ENCODE measurements at regions of chr17 and their contacts with region 1.

Region 1: GRCh38 chr17:40168262-40168832 is 8.9 kb upstream of the RAPGEFL1 start:
- DNase-seq: peak; percentile 44
- H3K4me3 Mint-ChIP-seq: no peak overlapping the region
- H3K27ac Mint-ChIP-seq: peak overlapping the region; percentile 77
- H3K4me1 Mint-ChIP-seq: peaks cover 7% of the 10 kb centered on the region
- H3K27me3 Mint-ChIP-seq: no peaks in the 10 kb centered on the region

Region 2: DNA sequence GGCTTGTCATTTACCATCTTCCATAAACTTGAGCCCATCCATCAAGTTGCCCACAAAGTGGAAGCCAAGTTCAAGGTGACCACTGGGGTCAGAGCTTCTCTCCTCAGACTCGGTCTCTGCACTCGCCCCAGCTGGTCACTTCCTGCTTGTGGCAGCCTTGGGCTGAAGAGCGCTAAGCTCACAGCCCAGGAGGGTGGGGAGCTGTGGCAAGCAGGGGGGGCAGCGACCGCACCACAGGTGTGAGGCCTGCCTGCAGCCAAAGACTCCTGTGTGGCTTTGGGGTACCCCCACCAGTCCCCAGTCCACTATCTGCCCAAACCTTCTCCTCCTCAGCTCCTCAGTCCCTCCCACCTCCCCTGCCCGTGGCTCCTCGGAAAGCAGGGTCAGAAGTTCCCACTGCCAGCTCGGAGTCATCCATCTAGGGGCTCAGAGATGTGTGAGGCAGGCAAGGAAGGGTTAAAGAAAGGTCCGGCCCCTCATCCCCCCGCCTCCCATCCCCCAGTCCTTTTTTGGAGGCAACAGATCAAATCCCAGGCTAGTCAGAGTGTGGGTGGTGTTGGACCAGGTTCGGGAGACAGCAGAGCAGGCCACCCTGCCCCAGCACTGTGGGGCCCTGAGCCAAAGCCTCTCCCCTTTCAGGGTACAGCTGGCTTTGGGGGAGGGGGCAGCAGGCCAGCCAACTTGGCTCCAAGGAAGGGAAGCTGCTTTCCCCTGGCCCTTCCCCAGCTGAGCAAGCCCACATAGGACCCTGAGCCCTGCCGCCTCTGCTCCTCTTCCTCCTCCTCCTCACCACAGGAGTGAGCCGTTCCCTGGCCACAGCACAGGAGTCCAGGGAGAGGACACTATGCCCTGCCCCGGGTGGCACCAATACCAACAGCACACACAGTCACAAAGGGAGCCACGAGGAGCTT is 149.9 kb before region 1 on chr17:
- CTCF ChIA-PET with region 1: interaction called, 12 read pairs
- intact Hi-C with region 1: loop called (anchors 1 kb)
- DNase-seq: no peak
- H3K4me3 Mint-ChIP-seq: no peak overlapping the region
- H3K27ac Mint-ChIP-seq: no peak overlapping the region
- H3K4me1 Mint-ChIP-seq: peaks cover 4% of the 10 kb centered on the region
- H3K27me3 Mint-ChIP-seq: no peaks in the 10 kb centered on the region

Region 3: DNA sequence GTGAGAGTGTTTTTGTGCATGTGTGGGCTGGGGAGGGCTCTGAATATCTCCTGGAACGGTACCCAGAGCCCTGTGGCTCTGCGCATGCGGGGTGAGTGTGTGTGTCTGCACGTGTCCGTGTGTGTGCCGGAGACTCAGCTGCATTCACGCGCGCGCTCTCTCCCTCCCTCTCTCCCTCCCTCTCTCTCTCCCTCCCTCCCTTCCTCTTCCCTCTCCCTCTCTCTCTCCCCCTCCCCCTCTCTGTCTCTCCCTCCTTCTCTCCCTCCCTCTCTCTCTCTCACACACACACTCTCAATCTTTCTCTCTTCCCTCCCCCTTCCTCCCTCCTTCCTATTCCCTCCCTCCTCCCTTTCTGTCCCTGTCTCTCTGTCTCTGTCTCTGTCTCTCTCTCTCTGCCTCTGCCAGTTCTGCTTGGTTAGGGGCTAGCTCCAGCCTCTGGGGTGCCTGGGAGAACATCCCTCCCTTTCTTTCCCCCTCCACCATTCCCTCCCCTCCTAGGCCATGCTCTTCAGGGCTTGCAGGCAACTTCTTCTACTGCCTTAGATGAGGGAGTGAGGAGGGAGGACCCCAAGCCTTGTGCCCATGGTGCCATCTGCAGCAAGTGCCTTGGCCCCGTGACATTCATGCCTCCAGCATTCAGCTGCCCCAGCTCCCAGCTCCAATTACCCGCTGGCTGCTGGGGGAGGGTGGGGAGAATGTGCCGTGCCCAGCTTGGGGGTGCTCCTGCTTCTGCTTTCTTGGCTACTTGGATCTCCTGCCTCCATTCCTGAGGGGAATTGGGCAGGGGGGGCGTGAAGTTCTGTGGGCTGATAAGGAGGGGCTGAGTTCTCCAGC is 99.2 kb before region 1 on chr17:
- CTCF ChIA-PET with region 1: interaction called, 7 read pairs
- intact Hi-C with region 1: loop called (anchors 5 kb)
- DNase-seq: peak; percentile 89
- H3K4me3 Mint-ChIP-seq: peak overlapping the region; percentile 73
- H3K27ac Mint-ChIP-seq: peak overlapping the region; percentile 92
- H3K4me1 Mint-ChIP-seq: peaks cover 72% of the 10 kb centered on the region
- H3K27me3 Mint-ChIP-seq: no peaks in the 10 kb centered on the region

Region 4: DNA sequence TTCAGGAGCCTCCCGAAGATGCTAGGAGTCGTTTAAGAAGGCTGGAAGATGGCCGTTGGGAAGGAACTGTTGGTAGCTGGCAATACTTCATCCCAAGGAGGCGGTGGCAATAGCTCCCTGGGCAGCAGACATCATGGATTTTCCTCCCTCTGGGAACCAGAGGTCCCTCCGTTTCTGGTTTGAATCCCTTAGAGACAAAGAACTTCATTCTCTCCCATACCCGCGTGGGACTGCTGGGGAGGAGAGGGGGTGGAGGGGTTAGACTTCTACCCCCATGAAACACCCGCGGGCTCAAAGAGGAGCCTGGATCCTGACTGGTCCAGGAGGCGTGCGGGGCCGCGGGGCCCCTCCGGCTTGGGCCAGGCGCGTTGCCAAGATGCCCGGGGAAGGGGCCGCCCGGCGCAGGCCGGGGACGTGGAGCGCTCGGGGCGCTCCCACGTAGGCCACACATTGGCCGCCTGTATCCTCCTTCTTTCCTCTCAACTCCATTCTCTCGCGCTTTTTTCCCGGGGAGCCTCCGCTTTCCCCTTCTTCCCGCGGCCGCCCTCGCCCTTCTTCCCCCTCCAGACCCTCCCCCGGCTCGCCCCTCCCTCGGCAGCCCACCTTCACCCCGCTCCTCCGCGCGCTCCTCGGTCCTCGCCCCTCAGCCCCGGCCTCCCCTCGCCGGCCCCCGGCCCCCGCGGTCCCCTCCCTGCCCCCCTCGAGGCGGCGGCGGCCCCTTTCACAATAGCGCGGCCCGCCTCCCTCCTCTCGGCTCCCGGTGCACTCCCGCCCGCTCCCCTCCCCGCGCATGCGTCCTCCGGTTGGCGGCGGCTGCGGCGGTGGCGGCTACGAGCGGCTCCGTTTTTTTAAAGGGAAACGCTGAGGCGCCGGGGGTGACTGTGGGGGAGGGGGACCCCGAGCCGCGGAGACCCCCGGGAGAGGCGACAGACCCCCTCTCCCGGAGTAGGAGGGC is 46.9 kb before region 1 on chr17 and contains the start of gene MSL1:
- CTCF ChIA-PET with region 1: interaction called, 13 read pairs
- intact Hi-C with region 1: loop called (anchors 2 kb)
- DNase-seq: peak; percentile 86
- H3K4me3 Mint-ChIP-seq: peak within 1 kb of the TSS; percentile 92
- H3K27ac Mint-ChIP-seq: peak within 1 kb of the TSS; percentile 79
- H3K4me1 Mint-ChIP-seq: peaks cover 25% of the 10 kb centered on the region
- H3K27me3 Mint-ChIP-seq: no peaks in the 10 kb centered on the region
- total RNA-seq, gene MSL1: 72.1 to 72.2 TPM

Region 5: GRCh38 chr17:40157973-40158372 is 10.4 kb before region 1 on chr17:
- CTCF ChIA-PET with region 1: interaction called, 15 read pairs
- intact Hi-C with region 1: no loop called
- DNase-seq: no peak
- H3K4me3 Mint-ChIP-seq: no peak overlapping the region
- H3K27ac Mint-ChIP-seq: peak overlapping the region; percentile 39
- H3K4me1 Mint-ChIP-seq: peaks cover 33% of the 10 kb centered on the region
- H3K27me3 Mint-ChIP-seq: no peaks in the 10 kb centered on the region

Region 6: GRCh38 chr17:40340880-40341807 is 172.8 kb after region 1 on chr17:
- CTCF ChIA-PET with region 1: no interaction called
- intact Hi-C with region 1: no loop called
- DNase-seq: peak; percentile 91
- H3K4me3 Mint-ChIP-seq: peak overlapping the region; percentile 38
- H3K27ac Mint-ChIP-seq: peak overlapping the region; percentile 61
- H3K4me1 Mint-ChIP-seq: peaks cover 71% of the 10 kb centered on the region
- H3K27me3 Mint-ChIP-seq: no peaks in the 10 kb centered on the region

Measured in activated naive CD4-positive, alpha-beta T cell treated with anti-CD3 and anti-CD28 coated beads for 36 hours (primary cell).